ENCODE measurements at regions of chr10 and their contacts with region 1.

Region 1: GRCh38 chr10:70540089-70540788 is 61.7 kb downstream of the PALD1 start:
- DNase-seq: no peak
- ATAC-seq: peak; percentile 39 to 61

Region 2: GRCh38 chr10:70461215-70461986 is 78.8 kb before region 1 on chr10:
- intact Hi-C with region 1: loop called (anchors 1 to 5 kb)
- DNase-seq: no peak
- ATAC-seq: peak; percentile 34 to 46